OCI-LY7 (cell line): ENCODE measurements at regions of chr2 and their contacts with region 1.

Region 1: GRCh38 chr2:54579684-54580620 is 123.8 kb downstream of the SPTBN1 start:
- DNase-seq: peak; percentile 68
- H3K4me3 ChIP-seq: peak overlapping the region; percentile 62
- H3K27ac ChIP-seq: peak overlapping the region; percentile 83
- H3K4me1 ChIP-seq: peaks cover 95% of the 10 kb centered on the region
- CTCF ChIP-seq: no peak

Region 2: GRCh38 chr2:54310311-54310710 is 269.6 kb before region 1 on chr2:
- CTCF ChIA-PET with region 1: no interaction called
- POLR2A ChIA-PET with region 1: no interaction called
- intact Hi-C with region 1: no loop called
- DNase-seq: no peak
- H3K4me3 ChIP-seq: no peak overlapping the region
- H3K27ac ChIP-seq: no peak overlapping the region
- H3K4me1 ChIP-seq: peaks cover 15% of the 10 kb centered on the region
- CTCF ChIP-seq: no peak

Region 3: GRCh38 chr2:54565547-54565946 is 14.4 kb before region 1 on chr2:
- CTCF ChIA-PET with region 1: interaction called, 3 read pairs
- POLR2A ChIA-PET with region 1: interaction called, 52 read pairs
- intact Hi-C with region 1: loop called (anchors 1 kb)
- DNase-seq: no peak
- H3K4me3 ChIP-seq: no peak overlapping the region
- H3K27ac ChIP-seq: no peak overlapping the region
- H3K4me1 ChIP-seq: peaks cover 85% of the 10 kb centered on the region
- CTCF ChIP-seq: no peak

Region 4: DNA sequence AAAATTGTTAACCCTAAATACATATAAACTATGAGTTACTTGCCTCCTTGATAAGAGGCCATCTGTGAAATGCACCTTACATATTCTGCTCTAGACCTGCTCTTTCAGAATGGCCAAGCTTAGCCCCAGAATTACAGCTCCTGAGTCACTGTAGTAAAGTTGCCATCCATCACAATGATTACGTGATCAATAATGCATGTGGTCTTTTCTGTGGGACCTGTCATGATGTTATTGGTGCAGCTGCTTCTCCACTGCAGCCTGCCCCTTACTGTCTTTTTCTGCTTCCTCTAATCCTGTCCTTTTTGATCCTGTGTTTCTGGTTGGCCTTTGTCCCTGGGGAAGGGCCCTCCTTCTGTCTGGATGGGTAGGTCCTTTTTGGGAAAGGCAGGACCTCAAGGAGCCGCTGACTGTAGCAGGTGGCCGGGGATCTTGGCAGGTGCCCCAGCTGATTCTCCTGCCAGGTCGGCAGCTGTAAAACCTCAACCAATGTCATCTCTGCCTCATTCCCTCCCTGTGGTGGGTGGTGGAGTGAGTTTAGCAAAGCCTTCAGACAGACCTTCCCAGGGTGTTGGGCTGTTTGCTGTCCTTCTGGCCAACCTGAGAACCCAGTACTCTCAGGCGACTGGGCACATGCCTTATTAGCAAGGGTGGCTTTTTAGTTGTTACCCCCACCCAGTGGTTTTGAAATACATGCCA is 17.3 kb after region 1 on chr2:
- CTCF ChIA-PET with region 1: interaction called, 4 read pairs
- POLR2A ChIA-PET with region 1: interaction called, 29 read pairs
- intact Hi-C with region 1: no loop called
- DNase-seq: peak; percentile 34
- H3K4me3 ChIP-seq: no peak overlapping the region
- H3K27ac ChIP-seq: no peak overlapping the region
- H3K4me1 ChIP-seq: peaks cover 61% of the 10 kb centered on the region
- CTCF ChIP-seq: no peak